Esophagus muscularis mucosa (tissue), 4 donors: ENCODE measurements at regions of chr9 and their contacts with region 1.

Region 1: DNA sequence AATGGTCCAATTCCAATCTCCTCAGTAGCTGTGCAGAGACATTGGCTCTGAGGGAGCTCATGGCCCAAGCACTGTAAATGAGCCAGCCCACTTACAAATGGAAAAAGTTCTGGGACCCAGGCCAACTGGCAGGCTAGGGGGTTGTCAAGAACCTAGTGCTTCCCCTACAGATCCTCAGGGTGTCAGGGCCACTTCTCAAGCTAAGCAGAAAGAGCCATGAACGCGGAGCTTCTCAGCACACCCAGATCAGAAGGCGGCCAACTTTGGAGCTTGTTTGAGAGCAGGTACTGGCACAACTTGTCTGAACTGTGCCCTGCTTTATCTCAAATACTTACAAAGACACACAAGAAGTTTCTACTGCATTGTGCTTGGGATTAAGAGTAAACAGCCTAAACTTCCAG is 17.5 kb downstream of the TLE1 start:
- DNase-seq: peak; percentile 97
- H3K4me3 ChIP-seq: no peak overlapping the region
- H3K27ac ChIP-seq: peak overlapping the region; percentile 69 to 73 (median 71)
- H3K4me1 ChIP-seq: peaks cover 38 to 83% (median 71%) of the 10 kb centered on the region in 4 donors
- H3K27me3 ChIP-seq: no peaks in the 10 kb centered on the region
- CTCF ChIP-seq: no peak
- EP300 ChIP-seq: no peak
- POLR2A ChIP-seq: no peak

Region 2: DNA sequence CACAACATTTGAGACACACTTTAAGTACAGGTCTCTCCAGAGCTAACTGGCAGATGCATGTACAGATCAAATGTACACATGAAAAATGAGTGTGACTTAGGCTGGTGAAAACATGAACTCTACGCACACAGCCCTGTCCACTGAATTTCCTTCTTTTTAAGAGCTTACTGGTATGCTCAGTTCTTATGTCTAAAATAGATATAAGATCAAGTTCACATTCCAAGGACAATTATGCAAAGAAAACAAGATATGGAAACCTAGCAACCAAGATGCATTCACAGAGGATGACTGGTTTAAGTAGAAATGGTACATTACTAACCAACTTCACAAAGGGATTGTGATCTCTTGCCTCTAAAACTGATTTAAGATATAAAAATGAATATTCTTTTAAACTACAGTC is 39.3 kb before region 1 on chr9:
- intact Hi-C with region 1: loop called (anchors 5 kb)
- DNase-seq: no peak
- H3K4me3 ChIP-seq: no peak overlapping the region
- H3K27ac ChIP-seq: no peak overlapping the region
- H3K4me1 ChIP-seq: peaks cover 3 to 51% (median 38%) of the 10 kb centered on the region in 4 donors
- H3K27me3 ChIP-seq: no peaks in the 10 kb centered on the region
- CTCF ChIP-seq: no peak
- EP300 ChIP-seq: no peak
- POLR2A ChIP-seq: no peak

Region 3: GRCh38 chr9:81771571-81771970 is 99.7 kb after region 1 on chr9:
- intact Hi-C with region 1: no loop called
- DNase-seq: no peak
- H3K4me3 ChIP-seq: no peak overlapping the region
- H3K27ac ChIP-seq: no peak overlapping the region
- H3K4me1 ChIP-seq: no peaks in the 10 kb centered on the region
- H3K27me3 ChIP-seq: no peaks in the 10 kb centered on the region
- CTCF ChIP-seq: no peak
- EP300 ChIP-seq: no peak
- POLR2A ChIP-seq: no peak